CD8-positive, alpha-beta memory T cell (primary cell): ENCODE measurements at regions of chr22 and their contacts with region 1.

Region 1: DNA sequence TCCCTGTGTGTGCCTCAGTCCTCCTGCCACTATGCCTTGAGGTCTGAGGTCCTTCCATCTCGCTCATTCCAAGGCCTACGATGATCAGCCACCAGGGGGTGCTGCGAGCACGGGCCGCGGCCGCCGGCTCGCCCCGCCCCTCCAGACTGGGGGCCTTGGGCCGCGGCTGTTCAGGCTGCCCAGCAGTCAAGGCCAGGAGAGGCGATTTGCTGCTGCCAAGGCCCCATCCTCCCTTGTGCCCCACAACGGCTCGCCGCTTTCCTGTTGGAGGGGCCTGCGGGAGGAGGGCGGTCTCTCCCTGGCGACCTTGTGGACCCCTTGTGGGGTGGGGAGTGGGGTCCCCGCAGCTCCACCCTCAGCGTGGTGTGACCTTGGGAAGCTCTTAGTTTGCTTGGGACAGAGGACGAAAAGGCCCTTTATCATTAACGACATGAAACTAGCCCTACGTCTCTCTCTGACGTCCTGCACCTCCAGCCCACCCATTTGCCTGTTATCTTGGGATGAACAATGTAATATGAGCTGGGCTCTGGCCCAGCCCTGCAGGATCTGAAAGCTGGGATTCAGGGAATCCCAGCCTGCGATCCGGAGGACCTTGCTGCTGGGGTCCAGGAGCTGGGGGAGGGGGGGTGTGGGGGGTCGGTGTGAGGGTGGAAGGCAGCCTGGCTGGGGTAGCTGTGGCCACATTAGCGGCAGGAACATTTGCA is 5.3 kb upstream of the GALR3 start:
- DNase-seq: peak; percentile 67 to 81 (median 74)
- H3K4me3 ChIP-seq: peak overlapping the region; percentile 55
- H3K4me3 Mint-ChIP-seq: peak overlapping the region in 4 of 7 donors; percentile 29 to 59 (median 38)
- H3K27ac ChIP-seq: no peak overlapping the region
- H3K27ac Mint-ChIP-seq: no peak overlapping the region
- H3K4me1 ChIP-seq: peaks cover 18% of the 10 kb centered on the region
- H3K4me1 Mint-ChIP-seq: peaks cover 8 to 19% (median 15%) of the 10 kb centered on the region in 3 donors
- H3K27me3 ChIP-seq: no peaks in the 10 kb centered on the region
- H3K27me3 Mint-ChIP-seq: peaks cover 17 to 25% of the 10 kb centered on the region in 2 donors

Region 2: DNA sequence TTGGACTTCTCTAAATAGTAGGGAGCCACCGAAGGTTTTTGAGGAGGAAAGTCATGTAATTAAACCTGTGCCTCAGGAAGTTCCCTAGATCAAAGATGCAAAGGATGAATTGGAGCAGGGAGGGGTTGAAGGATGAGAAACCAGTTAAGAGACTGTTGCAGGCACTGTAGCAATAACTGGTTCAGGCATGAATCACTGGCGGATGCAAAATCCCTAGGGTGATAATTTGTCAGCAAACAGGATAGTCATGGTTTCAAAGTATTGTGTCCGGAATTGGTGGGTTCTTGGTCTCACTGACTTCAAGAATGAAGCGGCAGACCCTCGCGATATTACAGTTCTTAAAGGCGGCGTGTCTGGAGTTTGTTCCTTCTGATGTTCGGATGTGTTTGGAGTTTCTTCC is 101.1 kb before region 1 on chr22:
- CTCF ChIA-PET with region 1: no interaction called
- POLR2A ChIA-PET with region 1: no interaction called
- DNase-seq: no peak
- H3K4me3 ChIP-seq: no peak overlapping the region
- H3K4me3 Mint-ChIP-seq: no peak overlapping the region
- H3K27ac ChIP-seq: no peak overlapping the region
- H3K27ac Mint-ChIP-seq: no peak overlapping the region
- H3K4me1 ChIP-seq: no peaks in the 10 kb centered on the region
- H3K4me1 Mint-ChIP-seq: no peaks in the 10 kb centered on the region
- H3K27me3 ChIP-seq: no peaks in the 10 kb centered on the region
- H3K27me3 Mint-ChIP-seq: no peaks in the 10 kb centered on the region

Region 3: GRCh38 chr22:37807410-37808293 is 10.2 kb before region 1 on chr22 and contains the start of gene GCAT:
- CTCF ChIA-PET with region 1: interaction called, 46 read pairs
- POLR2A ChIA-PET with region 1: interaction called, 12 read pairs
- DNase-seq: peak; percentile 75 to 85 (median 81)
- H3K4me3 ChIP-seq: peak within 1 kb of the TSS; percentile 70
- H3K4me3 Mint-ChIP-seq: peak within 1 kb of the TSS; percentile 66 to 89 (median 73)
- H3K27ac ChIP-seq: peak within 1 kb of the TSS; percentile 64
- H3K27ac Mint-ChIP-seq: peak within 1 kb of the TSS in 2 of 8 donors; percentile 5 to 59
- H3K4me1 ChIP-seq: peaks cover 43% of the 10 kb centered on the region
- H3K4me1 Mint-ChIP-seq: peaks cover 31 to 54% (median 36%) of the 10 kb centered on the region in 3 donors
- H3K27me3 ChIP-seq: peaks cover 52% of the 10 kb centered on the region
- H3K27me3 Mint-ChIP-seq: peaks cover 67 to 70% of the 10 kb centered on the region in 2 donors
- total RNA-seq, gene GCAT: 9.3 to 10.0 TPM

Region 4: GRCh38 chr22:37843741-37843990 is 25.8 kb after region 1 on chr22:
- CTCF ChIA-PET with region 1: interaction called, 24 read pairs
- POLR2A ChIA-PET with region 1: no interaction called
- DNase-seq: peak in 2 of 5 donors; percentile 28 to 73
- H3K4me3 ChIP-seq: peak overlapping the region; percentile 72
- H3K4me3 Mint-ChIP-seq: peak overlapping the region; percentile 87 to 95 (median 89)
- H3K27ac ChIP-seq: peak overlapping the region; percentile 87
- H3K27ac Mint-ChIP-seq: peak overlapping the region; percentile 74 to 93 (median 90)
- H3K4me1 ChIP-seq: peaks cover 20% of the 10 kb centered on the region
- H3K4me1 Mint-ChIP-seq: peaks cover 18 to 31% (median 18%) of the 10 kb centered on the region in 3 donors
- H3K27me3 ChIP-seq: no peaks in the 10 kb centered on the region
- H3K27me3 Mint-ChIP-seq: no peaks in the 10 kb centered on the region

Region 5: DNA sequence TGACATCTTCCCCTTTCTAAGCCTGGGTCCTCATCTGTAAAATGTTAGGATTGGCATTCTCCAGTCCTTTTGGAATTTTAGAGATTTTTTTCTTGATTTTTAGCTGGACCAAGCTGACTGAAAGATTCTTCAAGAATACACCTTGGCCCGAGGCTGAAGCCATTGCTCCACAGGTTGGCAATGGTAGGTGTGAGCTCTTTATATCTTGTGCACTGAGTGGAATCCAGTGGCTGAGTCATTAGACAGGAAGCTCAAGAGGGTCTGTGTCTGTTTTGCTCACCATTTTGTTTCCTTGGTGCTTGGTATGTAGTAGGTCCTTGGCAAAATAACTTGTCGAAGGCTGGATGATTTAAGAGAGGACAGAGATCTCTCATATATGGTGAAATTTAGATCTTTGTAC is 37.6 kb after region 1 on chr22:
- CTCF ChIA-PET with region 1: interaction called, 140 read pairs
- POLR2A ChIA-PET with region 1: no interaction called
- DNase-seq: no peak
- H3K4me3 ChIP-seq: no peak overlapping the region
- H3K4me3 Mint-ChIP-seq: peak overlapping the region in 1 of 7 donors; percentile 25
- H3K27ac ChIP-seq: no peak overlapping the region
- H3K27ac Mint-ChIP-seq: peak overlapping the region in 5 of 8 donors; percentile 0 to 55 (median 17)
- H3K4me1 ChIP-seq: peaks cover 20% of the 10 kb centered on the region
- H3K4me1 Mint-ChIP-seq: peaks cover 37 to 50% (median 42%) of the 10 kb centered on the region in 3 donors
- H3K27me3 ChIP-seq: no peaks in the 10 kb centered on the region
- H3K27me3 Mint-ChIP-seq: peaks cover 0 to 1% of the 10 kb centered on the region in 2 donors

Region 6: GRCh38 chr22:37862570-37863325 is 44.9 kb after region 1 on chr22:
- CTCF ChIA-PET with region 1: interaction called, 140 read pairs
- POLR2A ChIA-PET with region 1: interaction called, 4 read pairs
- DNase-seq: no peak
- H3K4me3 ChIP-seq: no peak overlapping the region
- H3K4me3 Mint-ChIP-seq: no peak overlapping the region
- H3K27ac ChIP-seq: no peak overlapping the region
- H3K27ac Mint-ChIP-seq: peak overlapping the region in 2 of 8 donors; percentile 1 to 69
- H3K4me1 ChIP-seq: no peaks in the 10 kb centered on the region
- H3K4me1 Mint-ChIP-seq: peaks cover 7 to 12% (median 7%) of the 10 kb centered on the region in 3 donors
- H3K27me3 ChIP-seq: no peaks in the 10 kb centered on the region
- H3K27me3 Mint-ChIP-seq: no peaks in the 10 kb centered on the region

Region 7: GRCh38 chr22:37930270-37930951 is 112.6 kb after region 1 on chr22:
- CTCF ChIA-PET with region 1: interaction called, 12 read pairs
- POLR2A ChIA-PET with region 1: no interaction called
- DNase-seq: no peak
- H3K4me3 ChIP-seq: no peak overlapping the region
- H3K4me3 Mint-ChIP-seq: no peak overlapping the region
- H3K27ac ChIP-seq: no peak overlapping the region
- H3K27ac Mint-ChIP-seq: peak overlapping the region in 2 of 8 donors; percentile 33 to 35
- H3K4me1 ChIP-seq: peaks cover 7% of the 10 kb centered on the region
- H3K4me1 Mint-ChIP-seq: peaks cover 8 to 17% (median 10%) of the 10 kb centered on the region in 3 donors
- H3K27me3 ChIP-seq: no peaks in the 10 kb centered on the region
- H3K27me3 Mint-ChIP-seq: peaks cover 0 to 2% of the 10 kb centered on the region in 2 donors

Region 8: GRCh38 chr22:37965940-37966664 is 148.2 kb after region 1 on chr22:
- CTCF ChIA-PET with region 1: interaction called, 32 read pairs
- POLR2A ChIA-PET with region 1: no interaction called
- DNase-seq: no peak
- H3K4me3 ChIP-seq: no peak overlapping the region
- H3K4me3 Mint-ChIP-seq: no peak overlapping the region
- H3K27ac ChIP-seq: no peak overlapping the region
- H3K27ac Mint-ChIP-seq: peak overlapping the region in 1 of 8 donors; percentile 87
- H3K4me1 ChIP-seq: no peaks in the 10 kb centered on the region
- H3K4me1 Mint-ChIP-seq: peaks cover 6 to 14% (median 9%) of the 10 kb centered on the region in 3 donors
- H3K27me3 ChIP-seq: no peaks in the 10 kb centered on the region
- H3K27me3 Mint-ChIP-seq: peaks cover 0 to 2% of the 10 kb centered on the region in 2 donors